ENCODE measurements at regions of chr2 and their contacts with region 1.

Region 1: GRCh38 chr2:152627351-152627957 is 89.8 kb downstream of the PRPF40A start:
- DNase-seq: no peak
- ATAC-seq: peak in 7 of 8 donors; percentile 52 to 75 (median 67)
- H3K4me3 ChIP-seq: no peak overlapping the region
- H3K27ac ChIP-seq: no peak overlapping the region
- H3K4me1 ChIP-seq: peaks cover 0 to 4% (median 0%) of the 10 kb centered on the region in 9 donors
- H3K27me3 ChIP-seq: no peaks in the 10 kb centered on the region
- CTCF ChIP-seq: peak; percentile 18 to 78 (median 64)

Region 2: DNA sequence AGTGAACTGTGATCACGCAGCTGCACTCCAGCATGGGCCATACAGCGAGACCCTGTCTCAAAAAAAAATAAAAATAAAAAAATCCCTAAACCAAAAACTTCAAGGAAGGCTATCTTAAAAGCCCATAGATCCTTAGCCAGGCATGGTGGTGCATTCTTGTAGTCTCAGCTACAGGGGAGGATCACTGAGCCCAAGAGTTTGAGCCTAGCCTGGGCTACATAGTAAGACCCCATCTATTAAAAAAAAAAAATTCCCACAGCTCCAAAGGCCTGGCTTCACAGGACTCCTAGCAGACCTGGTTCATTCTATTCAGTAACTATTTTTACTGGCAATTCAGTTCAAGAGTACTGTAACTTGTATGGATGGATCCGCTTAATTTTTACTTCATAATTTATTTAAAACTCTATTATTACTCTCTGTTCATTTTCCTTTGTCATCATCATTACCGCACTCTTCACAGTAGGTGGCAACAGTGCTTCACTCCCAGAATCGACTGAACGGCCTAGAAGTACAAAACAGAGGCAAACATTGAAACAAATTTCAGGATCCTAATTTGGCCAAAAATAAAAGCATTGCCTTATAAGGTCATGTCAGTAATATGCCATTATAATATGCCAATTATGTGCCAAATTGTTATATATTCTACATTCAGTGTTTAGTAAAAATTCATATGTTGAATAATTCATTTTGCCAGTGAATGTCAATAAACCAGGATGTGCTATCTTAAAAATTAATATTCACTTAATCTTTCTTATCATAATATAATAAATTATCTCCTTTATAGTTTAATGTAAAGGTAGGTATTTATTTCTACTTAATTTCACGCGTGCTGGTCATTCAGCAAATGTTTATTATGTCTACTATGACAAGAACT is 437.6 kb before region 1 on chr2:
- intact Hi-C with region 1: loop called in 6 of 10 experiments (anchors 1 to 5 kb)
- DNase-seq: peak in 1 of 2 donors; percentile 36
- ATAC-seq: peak in 7 of 8 donors; percentile 61 to 88 (median 82)
- H3K4me3 ChIP-seq: no peak overlapping the region
- H3K27ac ChIP-seq: no peak overlapping the region
- H3K4me1 ChIP-seq: no peaks in the 10 kb centered on the region
- H3K27me3 ChIP-seq: peaks cover 0 to 11% (median 0%) of the 10 kb centered on the region in 7 donors
- CTCF ChIP-seq: peak; percentile 56 to 92 (median 84)

Region 3: GRCh38 chr2:153138619-153139375 is 511.3 kb after region 1 on chr2:
- intact Hi-C with region 1: no loop called
- DNase-seq: no peak
- ATAC-seq: no peak
- H3K4me3 ChIP-seq: no peak overlapping the region
- H3K27ac ChIP-seq: no peak overlapping the region
- H3K4me1 ChIP-seq: no peaks in the 10 kb centered on the region
- H3K27me3 ChIP-seq: no peaks in the 10 kb centered on the region
- CTCF ChIP-seq: no peak